BJ (cell line): ENCODE measurements at regions of chr11 and their contacts with region 1.

Region 1: DNA sequence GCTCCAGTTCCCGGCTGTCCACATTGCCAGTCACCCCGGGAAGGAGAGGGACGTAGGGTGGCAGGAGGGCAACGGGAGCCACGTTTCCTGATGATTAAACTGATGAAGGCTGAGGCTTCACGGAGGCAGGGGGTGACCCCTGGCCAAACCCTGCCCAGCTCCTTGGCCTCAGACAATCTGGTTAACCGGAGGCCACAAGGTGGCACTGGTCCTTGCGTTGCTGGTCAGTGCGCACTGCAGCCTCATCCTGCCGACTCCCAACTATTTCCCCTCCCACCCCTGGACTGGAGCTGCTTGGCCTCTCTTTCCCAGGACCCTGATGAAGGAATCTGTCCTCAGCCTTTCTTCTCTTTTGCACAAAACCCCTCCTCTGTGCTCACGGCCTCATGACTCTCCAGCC is 75.3 kb downstream of the PDE2A start:
- DNase-seq: no peak
- H3K4me3 ChIP-seq: no peak overlapping the region
- H3K27me3 ChIP-seq: peaks cover 28% of the 10 kb centered on the region
- CTCF ChIP-seq: peak; percentile 54

Region 2: DNA sequence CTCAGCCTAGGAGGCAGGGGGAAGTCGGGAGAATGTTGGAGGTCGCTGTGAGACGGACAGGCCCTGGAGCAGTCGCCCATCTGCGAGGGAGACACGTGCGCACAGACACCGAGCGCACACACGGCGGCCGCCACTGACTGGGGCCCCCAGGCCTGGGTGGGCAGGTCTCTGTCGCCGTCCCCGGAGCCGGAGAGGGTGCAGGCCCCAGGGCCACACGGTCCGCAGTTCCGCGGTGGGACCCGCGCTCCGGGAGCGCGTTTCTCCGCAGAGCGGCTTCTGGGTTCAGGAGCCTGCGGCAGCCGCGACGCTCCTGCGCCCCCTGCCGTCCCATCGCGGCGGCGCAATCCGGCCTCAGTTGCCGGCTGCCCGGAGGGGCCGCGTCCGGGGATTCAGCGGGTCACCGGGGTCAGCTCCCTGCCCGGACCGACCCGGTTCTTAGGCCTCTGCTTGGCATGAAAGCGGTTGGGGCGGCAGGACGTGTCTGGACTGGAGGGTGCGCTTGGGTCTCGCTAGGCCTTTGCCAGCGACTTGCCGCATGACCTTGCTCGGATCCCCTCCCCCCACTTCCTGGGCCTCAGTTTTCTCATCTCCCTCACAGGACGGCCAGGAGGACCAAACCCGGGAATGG is 44.1 kb after region 1 on chr11:
- CTCF ChIA-PET with region 1: interaction called, 17 read pairs
- POLR2A ChIA-PET with region 1: no interaction called
- DNase-seq: no peak
- H3K4me3 ChIP-seq: peak overlapping the region; percentile 39
- H3K27me3 ChIP-seq: peaks cover 25% of the 10 kb centered on the region
- CTCF ChIP-seq: peak; percentile 74